Right ventricle myocardium superior (tissue), 1 donor: ENCODE measurements at regions of chr4 and their contacts with region 1.

Region 1: GRCh38 chr4:77385124-77385969 is 220.3 kb upstream of the CXCL13 start:
- DNase-seq: peak; percentile 44
- ATAC-seq: peak; percentile 81

Region 2: GRCh38 chr4:77193511-77194102 is 191.7 kb before region 1 on chr4:
- intact Hi-C with region 1: no loop called
- DNase-seq: peak; percentile 76
- ATAC-seq: peak; percentile 72

Region 3: GRCh38 chr4:77433418-77433733 is 48.0 kb after region 1 on chr4:
- intact Hi-C with region 1: loop called (anchors 5 kb)
- DNase-seq: no peak
- ATAC-seq: peak; percentile 89

Region 4: DNA sequence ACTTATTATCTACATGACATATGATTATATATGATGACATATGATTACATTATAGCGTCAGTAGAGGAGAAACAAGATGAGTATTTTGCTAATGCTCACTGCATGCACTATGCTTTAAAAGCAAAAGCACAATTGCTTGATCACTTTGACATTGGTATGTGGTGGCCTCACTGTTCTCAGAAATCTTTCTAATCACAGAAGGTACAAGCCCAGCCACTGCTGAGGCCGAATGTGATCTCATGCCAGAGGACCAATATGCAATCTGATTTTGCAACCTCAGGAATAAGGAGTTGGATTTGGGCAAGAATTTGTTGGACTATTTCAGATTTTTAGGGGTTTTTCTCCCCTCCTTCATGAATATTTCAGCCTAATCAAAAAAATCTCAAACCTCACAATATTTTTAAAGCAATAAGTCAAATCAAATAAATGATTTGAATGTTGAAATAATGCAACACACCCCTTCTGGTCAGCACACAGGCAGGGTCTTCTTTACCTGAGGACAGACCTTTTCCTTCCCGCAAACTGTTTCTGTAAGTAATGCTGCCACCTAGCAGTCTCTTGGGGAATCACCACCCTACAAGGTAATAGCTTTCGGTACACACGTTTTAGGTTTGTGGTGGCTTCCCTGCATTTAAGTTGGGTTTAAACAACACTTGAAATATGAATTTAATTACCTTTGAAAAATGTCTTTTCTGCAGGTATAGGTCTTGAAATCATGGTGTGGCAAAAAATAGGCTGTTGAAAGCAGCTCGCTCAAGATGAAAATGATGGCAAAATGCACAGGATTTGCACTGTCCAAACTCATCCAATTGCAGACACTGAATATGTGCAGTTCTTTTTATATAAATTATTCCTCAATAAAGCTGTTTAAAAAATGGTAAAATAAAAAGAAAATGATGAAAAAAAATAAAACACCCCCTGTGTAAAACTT is 215.4 kb after region 1 on chr4:
- intact Hi-C with region 1: loop called (anchors 5 kb)
- DNase-seq: no peak
- ATAC-seq: peak; percentile 67